ENCODE measurements at regions of chrX and their contacts with region 1.

Region 1: DNA sequence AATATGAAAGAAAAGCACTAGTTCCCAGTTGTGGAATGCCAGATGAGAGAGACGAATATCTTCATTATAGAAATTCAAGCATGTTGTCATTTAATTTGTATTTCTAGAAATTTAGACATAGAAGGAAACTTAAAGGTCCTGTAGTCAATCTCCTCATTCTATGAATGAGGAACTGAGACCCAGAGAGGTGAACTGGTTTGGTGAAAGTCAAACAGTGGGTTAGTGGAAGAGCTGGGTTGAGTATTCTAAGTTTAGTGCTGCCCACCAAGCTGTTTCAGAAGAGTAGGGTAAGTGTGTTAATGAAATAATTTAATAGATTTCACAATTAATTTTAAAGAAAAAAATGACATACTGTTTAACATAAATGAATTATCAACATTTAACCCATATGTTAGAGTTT is 655.2 kb downstream of the FAM133A start:
- DNase-seq: no peak
- H3K4me3 ChIP-seq: no peak overlapping the region
- H3K27ac ChIP-seq: no peak overlapping the region
- H3K4me1 ChIP-seq: no peaks in the 10 kb centered on the region
- H3K27me3 ChIP-seq: no peaks in the 10 kb centered on the region
- CTCF ChIP-seq: no peak
- POLR2A ChIP-seq: no peak

Region 2: DNA sequence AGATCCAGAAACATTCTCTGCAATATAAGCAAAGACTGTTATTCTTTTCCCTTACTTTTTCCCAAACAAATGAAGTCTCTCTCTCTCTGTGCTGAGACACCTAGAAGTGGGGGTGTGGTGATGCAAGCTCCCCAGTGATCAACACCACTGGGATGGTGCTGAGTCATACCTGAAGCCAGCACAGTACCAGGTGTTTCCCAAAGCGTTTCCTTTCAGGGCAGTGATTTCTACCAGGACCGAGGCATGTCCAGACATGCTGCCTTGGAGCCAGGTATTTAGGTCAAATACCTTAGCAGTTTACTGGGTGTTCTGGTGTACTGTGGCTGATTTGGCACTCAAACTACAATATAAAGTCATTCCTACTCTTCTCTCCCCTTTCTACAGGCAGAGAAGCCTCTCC is 71.3 kb after region 1 on chrX:
- intact Hi-C with region 1: loop called (anchors 10 kb)
- DNase-seq: no peak
- H3K4me3 ChIP-seq: no peak overlapping the region
- H3K27ac ChIP-seq: no peak overlapping the region
- H3K4me1 ChIP-seq: no peaks in the 10 kb centered on the region
- H3K27me3 ChIP-seq: no peaks in the 10 kb centered on the region
- CTCF ChIP-seq: no peak
- POLR2A ChIP-seq: no peak

Region 3: DNA sequence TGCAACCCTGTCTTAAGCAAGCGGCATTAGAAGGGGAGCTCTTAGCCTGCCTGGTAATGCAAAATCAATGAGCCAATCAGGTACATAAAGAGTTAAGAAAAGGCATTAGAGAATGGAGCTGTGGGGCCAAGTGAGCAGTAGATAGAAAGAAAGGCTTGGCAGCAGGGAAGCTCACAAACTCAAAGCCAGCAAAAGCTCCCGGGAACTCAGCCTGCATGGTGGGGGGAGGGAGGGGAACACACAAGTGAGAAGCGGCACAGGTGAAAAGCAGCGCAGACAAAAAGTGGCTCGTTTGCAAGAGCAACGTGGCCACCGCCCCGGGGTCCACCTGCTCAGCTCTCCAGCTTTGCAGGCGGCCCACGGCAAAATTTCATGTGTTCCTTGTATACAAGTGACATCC is 163.4 kb after region 1 on chrX:
- intact Hi-C with region 1: no loop called
- DNase-seq: no peak
- H3K4me3 ChIP-seq: no peak overlapping the region
- H3K27ac ChIP-seq: no peak overlapping the region
- H3K4me1 ChIP-seq: no peaks in the 10 kb centered on the region
- H3K27me3 ChIP-seq: no peaks in the 10 kb centered on the region
- CTCF ChIP-seq: no peak
- POLR2A ChIP-seq: no peak

Measured in spleen (tissue), 13 donors.